ENCODE measurements at regions of chr16 and their contacts with region 1.

Region 1: DNA sequence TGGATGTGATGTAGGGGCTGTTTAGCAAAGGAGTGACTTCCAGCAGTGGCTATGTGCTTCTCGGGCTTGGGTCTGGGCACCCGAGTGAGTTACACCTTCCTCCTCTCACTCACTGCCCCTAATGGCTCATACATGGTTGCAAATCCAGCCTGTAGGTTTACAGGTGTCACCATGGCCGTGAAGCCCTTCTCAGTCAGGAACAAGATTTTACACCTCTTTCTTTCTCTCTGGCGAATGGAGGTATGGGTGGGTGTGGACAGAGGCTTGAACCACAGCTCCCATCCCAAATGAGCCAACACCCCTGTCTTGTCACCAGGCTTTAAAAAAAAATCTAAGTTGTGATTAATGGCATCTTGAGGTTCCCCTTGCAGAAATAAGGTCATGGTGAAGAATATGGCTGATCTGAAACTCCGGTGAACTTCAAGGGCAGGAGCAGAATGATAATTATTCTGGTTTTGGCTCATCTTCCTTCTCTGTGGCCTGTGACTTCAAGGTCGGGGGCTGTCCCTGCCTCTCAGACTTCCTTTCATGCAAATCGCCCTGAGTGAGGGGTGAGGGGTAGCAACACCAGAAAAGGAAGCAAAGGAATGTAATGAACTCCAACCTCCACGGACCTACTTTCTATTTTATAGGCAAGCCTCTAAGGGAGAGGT is 331.2 kb downstream of the MAF start:
- DNase-seq: peak in 1 of 9 donors; percentile 66
- ATAC-seq: peak; percentile 12
- H3K4me3 ChIP-seq: peak overlapping the region; percentile 10
- H3K4me3 Mint-ChIP-seq: peak overlapping the region in 9 of 10 donors; percentile 23 to 79 (median 58)
- H3K27ac ChIP-seq: no peak overlapping the region
- H3K27ac Mint-ChIP-seq: peak overlapping the region in 2 of 9 donors; percentile 22 to 84
- H3K4me1 ChIP-seq: peaks cover 38 to 46% of the 10 kb centered on the region in 2 donors
- H3K4me1 Mint-ChIP-seq: peaks cover 41 to 78% (median 60%) of the 10 kb centered on the region in 7 donors
- H3K27me3 ChIP-seq: no peaks in the 10 kb centered on the region
- H3K27me3 Mint-ChIP-seq: peaks cover 15 to 43% (median 37%) of the 10 kb centered on the region in 5 donors

Region 2: DNA sequence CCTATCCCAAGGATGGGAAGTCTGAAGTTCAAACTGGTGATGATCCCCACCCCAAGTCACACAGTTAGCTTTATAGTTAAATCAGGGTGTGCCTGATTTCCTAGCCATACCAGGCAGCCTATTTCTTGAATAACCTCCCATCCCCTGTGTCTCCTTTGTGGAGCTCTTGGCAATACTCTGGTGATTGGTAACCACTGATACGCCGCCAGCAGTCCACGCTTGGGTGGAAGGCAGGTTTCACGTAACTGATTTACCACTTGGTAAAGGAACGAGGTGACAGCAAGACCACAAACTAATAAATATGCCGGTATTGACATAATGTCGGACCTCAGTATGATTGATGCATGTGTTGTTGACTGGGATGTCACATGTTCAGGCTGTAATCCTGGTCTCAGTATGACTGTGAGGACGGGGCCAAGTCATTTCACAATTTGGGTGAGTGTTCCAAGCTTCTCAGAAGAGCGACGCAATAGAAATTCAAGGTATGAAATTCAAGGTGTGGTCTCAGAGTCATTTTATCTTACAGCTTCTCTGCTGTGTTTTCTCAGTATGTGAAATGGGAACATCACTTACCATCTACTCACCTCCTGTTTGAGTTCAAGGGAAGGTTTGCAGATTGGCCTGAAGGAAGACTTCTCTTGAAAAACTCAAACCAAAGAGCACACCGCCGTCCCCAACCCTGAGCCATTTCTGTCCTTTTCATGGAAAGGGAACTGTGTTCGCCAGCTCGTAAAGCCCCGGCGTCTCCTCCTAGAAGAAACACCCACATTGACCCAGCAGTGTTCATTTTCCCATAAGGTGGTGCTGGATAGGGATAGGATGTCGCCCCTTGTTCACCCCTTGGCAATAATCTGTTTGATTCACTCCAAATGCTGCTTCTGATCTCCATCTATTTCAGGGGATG is 491.0 kb before region 1 on chr16:
- CTCF ChIA-PET with region 1: no interaction called
- POLR2A ChIA-PET with region 1: no interaction called
- intact Hi-C with region 1: loop called in 1 of 2 experiments (anchors 5 kb)
- DNase-seq: peak in 1 of 9 donors; percentile 55
- ATAC-seq: no peak
- H3K4me3 ChIP-seq: no peak overlapping the region
- H3K4me3 Mint-ChIP-seq: peak overlapping the region in 1 of 10 donors; percentile 76
- H3K27ac ChIP-seq: no peak overlapping the region
- H3K27ac Mint-ChIP-seq: peak overlapping the region in 1 of 9 donors; percentile 94
- H3K4me1 ChIP-seq: no peaks in the 10 kb centered on the region
- H3K4me1 Mint-ChIP-seq: peaks cover 0 to 52% (median 0%) of the 10 kb centered on the region in 7 donors
- H3K27me3 ChIP-seq: no peaks in the 10 kb centered on the region
- H3K27me3 Mint-ChIP-seq: no peaks in the 10 kb centered on the region

Region 3: GRCh38 chr16:79071424-79071823 is 197.9 kb before region 1 on chr16:
- CTCF ChIA-PET with region 1: no interaction called
- POLR2A ChIA-PET with region 1: no interaction called
- intact Hi-C with region 1: loop called in 1 of 2 experiments (anchors 2 kb)
- DNase-seq: no peak
- ATAC-seq: no peak
- H3K4me3 ChIP-seq: no peak overlapping the region
- H3K4me3 Mint-ChIP-seq: no peak overlapping the region
- H3K27ac ChIP-seq: no peak overlapping the region
- H3K27ac Mint-ChIP-seq: no peak overlapping the region
- H3K4me1 ChIP-seq: no peaks in the 10 kb centered on the region
- H3K4me1 Mint-ChIP-seq: peaks cover 14 to 53% (median 44%) of the 10 kb centered on the region in 7 donors
- H3K27me3 ChIP-seq: no peaks in the 10 kb centered on the region
- H3K27me3 Mint-ChIP-seq: peaks cover 0 to 11% (median 1%) of the 10 kb centered on the region in 5 donors

Region 4: GRCh38 chr16:79089735-79090284 is 179.5 kb before region 1 on chr16:
- CTCF ChIA-PET with region 1: no interaction called
- POLR2A ChIA-PET with region 1: no interaction called
- intact Hi-C with region 1: loop called in 1 of 2 experiments (anchors 1 kb)
- DNase-seq: peak in 8 of 9 donors; percentile 14 to 67 (median 36)
- ATAC-seq: peak; percentile 52
- H3K4me3 ChIP-seq: peak overlapping the region; percentile 7
- H3K4me3 Mint-ChIP-seq: peak overlapping the region; percentile 76 to 85 (median 82)
- H3K27ac ChIP-seq: no peak overlapping the region
- H3K27ac Mint-ChIP-seq: peak overlapping the region; percentile 48 to 85 (median 80)
- H3K4me1 ChIP-seq: peaks cover 40 to 46% of the 10 kb centered on the region in 2 donors
- H3K4me1 Mint-ChIP-seq: peaks cover 35 to 69% (median 57%) of the 10 kb centered on the region in 7 donors
- H3K27me3 ChIP-seq: no peaks in the 10 kb centered on the region
- H3K27me3 Mint-ChIP-seq: peaks cover 0 to 6% (median 0%) of the 10 kb centered on the region in 5 donors

Region 5: DNA sequence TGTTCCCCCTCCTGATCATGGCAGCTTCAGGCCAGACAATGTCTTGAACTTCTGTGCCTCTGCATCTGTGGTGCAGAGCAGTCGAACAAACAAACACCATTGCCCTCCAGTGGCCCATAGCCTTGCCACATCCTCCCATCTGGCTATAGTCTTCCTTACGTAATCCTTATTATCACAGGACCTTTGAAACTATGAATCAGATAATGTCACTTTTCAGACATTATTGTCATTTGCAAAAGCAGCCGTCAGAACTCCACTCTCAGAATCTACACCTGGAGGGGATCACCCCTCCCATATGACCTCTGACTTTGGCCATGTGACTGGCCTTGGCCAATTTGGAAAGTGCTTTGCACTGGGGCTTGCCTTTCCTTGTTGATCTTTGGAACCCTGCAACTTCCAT is 56.1 kb before region 1 on chr16:
- CTCF ChIA-PET with region 1: no interaction called
- POLR2A ChIA-PET with region 1: no interaction called
- intact Hi-C with region 1: loop called (anchors 1 to 10 kb)
- DNase-seq: no peak
- ATAC-seq: no peak
- H3K4me3 ChIP-seq: no peak overlapping the region
- H3K4me3 Mint-ChIP-seq: no peak overlapping the region
- H3K27ac ChIP-seq: no peak overlapping the region
- H3K27ac Mint-ChIP-seq: no peak overlapping the region
- H3K4me1 ChIP-seq: peaks cover 3 to 13% of the 10 kb centered on the region in 2 donors
- H3K4me1 Mint-ChIP-seq: peaks cover 2 to 19% (median 10%) of the 10 kb centered on the region in 7 donors
- H3K27me3 ChIP-seq: no peaks in the 10 kb centered on the region
- H3K27me3 Mint-ChIP-seq: no peaks in the 10 kb centered on the region

Region 6: GRCh38 chr16:79286646-79287423 is 17.5 kb after region 1 on chr16:
- CTCF ChIA-PET with region 1: interaction called, 3 read pairs
- POLR2A ChIA-PET with region 1: interaction called, 6 read pairs
- intact Hi-C with region 1: loop called (anchors 1 to 2 kb)
- DNase-seq: peak in 2 of 9 donors; percentile 21 to 40
- ATAC-seq: peak; percentile 73
- H3K4me3 ChIP-seq: peak overlapping the region; percentile 24
- H3K4me3 Mint-ChIP-seq: peak overlapping the region; percentile 26 to 75 (median 64)
- H3K27ac ChIP-seq: no peak overlapping the region
- H3K27ac Mint-ChIP-seq: peak overlapping the region in 3 of 9 donors; percentile 23 to 79 (median 45)
- H3K4me1 ChIP-seq: peaks cover 9 to 33% of the 10 kb centered on the region in 2 donors
- H3K4me1 Mint-ChIP-seq: peaks cover 15 to 46% (median 33%) of the 10 kb centered on the region in 7 donors
- H3K27me3 ChIP-seq: no peaks in the 10 kb centered on the region
- H3K27me3 Mint-ChIP-seq: peaks cover 0 to 8% (median 1%) of the 10 kb centered on the region in 5 donors

Region 7: GRCh38 chr16:79316004-79316458 is 46.7 kb after region 1 on chr16:
- CTCF ChIA-PET with region 1: no interaction called
- POLR2A ChIA-PET with region 1: no interaction called
- intact Hi-C with region 1: loop called in 1 of 2 experiments (anchors 1 kb)
- DNase-seq: peak in 1 of 9 donors; percentile 72
- ATAC-seq: no peak
- H3K4me3 ChIP-seq: no peak overlapping the region
- H3K4me3 Mint-ChIP-seq: peak overlapping the region in 1 of 10 donors; percentile 35
- H3K27ac ChIP-seq: no peak overlapping the region
- H3K27ac Mint-ChIP-seq: peak overlapping the region in 1 of 9 donors; percentile 70
- H3K4me1 ChIP-seq: peaks cover 0 to 4% of the 10 kb centered on the region in 2 donors
- H3K4me1 Mint-ChIP-seq: peaks cover 0 to 24% (median 0%) of the 10 kb centered on the region in 7 donors
- H3K27me3 ChIP-seq: no peaks in the 10 kb centered on the region
- H3K27me3 Mint-ChIP-seq: peaks cover under 1 to 48% (median 19%) of the 10 kb centered on the region in 5 donors

Region 8: GRCh38 chr16:79451196-79451816 is 182.0 kb after region 1 on chr16:
- CTCF ChIA-PET with region 1: no interaction called
- POLR2A ChIA-PET with region 1: no interaction called
- intact Hi-C with region 1: no loop called
- DNase-seq: no peak
- ATAC-seq: peak; percentile 60
- H3K4me3 ChIP-seq: no peak overlapping the region
- H3K4me3 Mint-ChIP-seq: peak overlapping the region in 1 of 10 donors; percentile 35
- H3K27ac ChIP-seq: no peak overlapping the region
- H3K27ac Mint-ChIP-seq: no peak overlapping the region
- H3K4me1 ChIP-seq: no peaks in the 10 kb centered on the region
- H3K4me1 Mint-ChIP-seq: peaks cover 0 to 17% (median 2%) of the 10 kb centered on the region in 7 donors
- H3K27me3 ChIP-seq: no peaks in the 10 kb centered on the region
- H3K27me3 Mint-ChIP-seq: peaks cover 0 to 11% (median 10%) of the 10 kb centered on the region in 5 donors

Measured in naive thymus-derived CD4-positive, alpha-beta T cell (primary cell).